ENCODE measurements at regions of chr1 and their contacts with region 1.

Region 1: DNA sequence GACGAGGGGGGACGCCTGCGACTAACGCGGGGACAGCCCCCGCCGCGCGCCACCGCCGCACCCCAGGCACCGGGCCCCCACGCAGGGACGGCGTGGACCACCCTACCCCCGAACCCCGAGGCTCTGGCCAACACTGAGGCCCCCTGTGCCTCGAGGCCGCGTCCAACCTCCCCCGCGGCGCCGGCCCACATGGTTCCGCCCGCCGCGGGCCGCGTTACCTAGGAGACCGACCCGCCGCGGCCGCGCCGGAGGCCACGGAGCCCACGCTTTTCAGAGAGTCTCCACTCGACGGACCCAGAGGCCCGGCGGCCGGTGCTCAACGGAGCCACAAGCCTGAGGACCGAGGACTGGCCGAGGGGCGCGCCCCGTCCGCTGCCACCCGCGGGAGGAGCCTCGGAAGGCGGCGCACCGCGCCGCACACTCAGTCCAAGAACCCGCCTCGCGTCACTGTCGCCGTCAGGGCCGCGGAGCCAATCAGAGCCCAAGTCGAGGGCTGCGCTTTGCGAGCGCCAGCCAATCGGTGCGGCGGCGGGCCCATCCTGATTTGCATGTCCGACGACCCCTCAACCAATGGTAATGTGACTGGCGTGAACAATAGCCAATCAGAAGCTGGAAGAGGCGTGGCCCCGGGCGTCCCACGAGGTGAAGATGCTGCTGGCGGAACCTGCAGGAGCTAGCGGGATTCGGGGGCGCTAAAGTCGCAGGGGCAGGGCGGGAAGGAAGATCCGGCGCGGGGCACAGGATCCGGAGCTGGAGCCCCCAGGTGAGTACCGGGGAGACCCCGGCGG is at the start of gene NPHP4:
- DNase-seq: peak; percentile 100
- ATAC-seq: peak; percentile 93
- H3K4me3 Mint-ChIP-seq: peak within 1 kb of the TSS; percentile 97
- H3K27ac Mint-ChIP-seq: peak within 1 kb of the TSS; percentile 96
- H3K4me1 Mint-ChIP-seq: peaks cover 25% of the 10 kb centered on the region
- H3K27me3 Mint-ChIP-seq: no peaks in the 10 kb centered on the region
- total RNA-seq, gene NPHP4: 12.9 to 14.1 TPM

Region 2: GRCh38 chr1:6007318-6008083 is 15.3 kb after region 1 on chr1:
- CTCF ChIA-PET with region 1: interaction called, 4 read pairs
- POLR2A ChIA-PET with region 1: no interaction called
- intact Hi-C with region 1: loop called in 1 of 2 experiments (anchors 1 kb)
- DNase-seq: peak; percentile 67
- ATAC-seq: peak; percentile 91
- H3K4me3 Mint-ChIP-seq: no peak overlapping the region
- H3K27ac Mint-ChIP-seq: peak overlapping the region; percentile 13
- H3K4me1 Mint-ChIP-seq: peaks cover 14% of the 10 kb centered on the region
- H3K27me3 Mint-ChIP-seq: no peaks in the 10 kb centered on the region

Region 3: GRCh38 chr1:6148497-6149241 is 156.4 kb after region 1 on chr1:
- CTCF ChIA-PET with region 1: no interaction called
- POLR2A ChIA-PET with region 1: no interaction called
- intact Hi-C with region 1: no loop called
- DNase-seq: peak; percentile 90
- ATAC-seq: peak; percentile 98
- H3K4me3 Mint-ChIP-seq: peak overlapping the region; percentile 28
- H3K27ac Mint-ChIP-seq: no peak overlapping the region
- H3K4me1 Mint-ChIP-seq: peaks cover 5% of the 10 kb centered on the region
- H3K27me3 Mint-ChIP-seq: peaks cover 7% of the 10 kb centered on the region

Region 4: DNA sequence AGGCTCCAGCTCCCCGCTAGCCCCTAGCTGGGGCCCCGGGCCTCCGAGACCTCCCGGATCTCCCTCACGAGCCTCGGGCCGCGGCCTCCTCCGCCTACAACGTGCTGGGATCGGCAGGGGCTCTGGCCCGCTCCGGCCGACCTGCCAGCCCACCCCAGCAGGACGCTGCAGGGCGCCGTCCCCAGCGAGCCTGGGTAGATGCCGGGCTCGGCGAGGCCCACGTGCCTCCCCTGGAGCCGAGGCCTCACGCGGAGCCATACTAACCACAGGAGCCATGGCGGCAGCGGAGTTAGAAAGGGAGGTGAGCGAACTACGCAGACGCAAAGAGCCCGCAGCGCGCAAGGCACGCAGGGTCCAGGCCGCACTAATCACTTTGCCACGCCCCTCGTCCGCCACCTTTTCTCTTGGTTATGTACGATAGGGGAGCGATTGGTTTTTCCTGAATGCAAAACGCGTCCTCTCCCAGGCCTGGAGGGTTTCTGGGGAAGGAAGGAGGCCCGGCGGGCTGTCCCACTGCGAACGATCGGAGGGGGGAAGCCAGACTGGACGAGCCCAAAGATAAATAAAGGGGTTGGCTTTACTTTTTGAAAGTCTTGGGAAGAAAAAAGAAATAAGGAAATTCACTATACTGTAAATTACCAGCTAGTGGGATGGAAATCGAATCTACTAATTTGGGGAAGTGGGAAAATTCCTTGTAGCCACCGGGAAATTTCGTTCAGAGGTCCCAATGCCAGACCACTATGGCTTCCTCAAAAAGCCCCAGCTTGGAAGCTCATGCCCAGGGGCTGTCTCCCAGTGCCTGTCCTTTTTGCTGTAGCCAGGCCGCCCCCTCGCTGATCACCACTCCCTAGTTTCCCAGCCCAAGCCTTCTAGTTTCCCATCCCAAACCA is 207.3 kb after region 1 on chr1 and contains the start of gene RPL22:
- CTCF ChIA-PET with region 1: interaction called, 4 read pairs
- POLR2A ChIA-PET with region 1: interaction called, 4 read pairs
- intact Hi-C with region 1: loop called (anchors 1 kb)
- DNase-seq: peak; percentile 99
- ATAC-seq: peak; percentile 99
- H3K4me3 Mint-ChIP-seq: peak within 1 kb of the TSS; percentile 99
- H3K27ac Mint-ChIP-seq: peak within 1 kb of the TSS; percentile 96
- H3K4me1 Mint-ChIP-seq: peaks cover 39% of the 10 kb centered on the region
- H3K27me3 Mint-ChIP-seq: no peaks in the 10 kb centered on the region
- total RNA-seq, gene RPL22: 392 to 475 TPM

Region 5: DNA sequence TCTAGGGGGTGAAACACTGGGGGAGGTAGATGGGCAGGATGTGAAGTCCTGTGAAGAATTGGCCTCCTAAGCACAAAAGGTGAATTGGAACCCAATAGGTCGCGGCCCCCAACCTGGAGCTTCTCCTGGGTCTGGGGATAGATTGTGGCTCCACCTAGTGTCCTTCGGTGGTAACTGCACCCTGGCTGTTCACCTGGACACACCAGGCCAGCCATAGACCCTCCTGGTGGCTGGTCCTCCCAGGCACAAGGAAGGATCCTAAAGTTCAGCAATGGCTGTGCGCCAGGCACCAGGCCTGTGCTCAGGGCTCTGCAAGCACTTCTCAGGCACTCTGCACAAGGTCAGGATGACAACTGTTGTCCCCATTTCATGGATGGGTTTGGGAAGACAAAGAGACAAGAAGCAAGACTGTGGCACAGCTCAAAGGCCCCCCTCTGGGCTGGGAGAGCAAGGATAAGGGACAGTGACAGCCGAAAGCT is 445.9 kb after region 1 on chr1:
- CTCF ChIA-PET with region 1: no interaction called
- POLR2A ChIA-PET with region 1: no interaction called
- intact Hi-C with region 1: no loop called
- DNase-seq: peak; percentile 85
- ATAC-seq: peak; percentile 72
- H3K4me3 Mint-ChIP-seq: no peak overlapping the region
- H3K27ac Mint-ChIP-seq: no peak overlapping the region
- H3K4me1 Mint-ChIP-seq: peaks cover 2% of the 10 kb centered on the region
- H3K27me3 Mint-ChIP-seq: peaks cover 16% of the 10 kb centered on the region

Region 6: DNA sequence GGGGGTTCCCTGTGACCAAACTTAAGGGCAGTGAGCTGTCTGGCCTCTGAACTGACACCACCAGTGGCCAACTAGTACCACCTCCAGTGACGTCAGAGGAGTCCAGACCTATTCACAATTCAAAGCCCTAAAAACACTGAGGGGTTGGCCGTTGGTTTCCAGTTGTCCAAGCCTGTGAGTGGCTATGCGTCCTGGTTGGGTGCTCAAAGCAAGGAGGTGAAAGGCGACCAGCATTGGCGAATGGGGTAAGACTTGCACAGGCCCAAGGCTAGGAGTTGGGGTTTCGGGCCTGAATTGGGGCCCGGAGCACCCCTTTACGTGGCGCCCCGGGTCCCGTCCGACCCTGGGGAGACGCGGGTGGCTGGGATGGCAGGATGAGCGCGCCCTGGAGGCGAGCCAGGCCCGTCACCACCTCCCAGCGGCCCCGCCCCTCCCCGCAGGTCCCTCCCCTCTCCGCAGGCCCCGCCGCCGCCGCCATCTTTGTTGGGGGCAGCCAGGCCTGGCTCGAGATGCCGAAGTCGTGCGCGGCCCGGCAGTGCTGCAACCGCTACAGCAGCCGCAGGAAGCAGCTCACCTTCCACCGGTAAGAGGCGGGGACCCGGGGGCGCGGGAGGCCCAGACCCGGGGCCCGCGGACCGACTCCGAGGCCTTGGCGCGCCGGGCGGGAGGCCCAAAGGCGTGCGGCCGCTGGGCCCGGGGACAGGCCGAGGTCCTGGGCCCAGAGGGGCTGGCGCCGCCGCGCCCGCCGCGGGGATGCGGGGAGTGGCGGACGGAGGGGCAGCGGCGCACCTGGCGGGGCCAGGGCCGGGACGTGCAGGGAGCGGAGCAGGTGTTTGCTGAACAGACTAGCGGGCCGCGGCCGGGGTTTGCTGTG is 632.7 kb after region 1 on chr1 and contains the start of gene THAP3:
- CTCF ChIA-PET with region 1: no interaction called
- POLR2A ChIA-PET with region 1: no interaction called
- intact Hi-C with region 1: loop called in 1 of 2 experiments (anchors 5 kb)
- DNase-seq: peak; percentile 96
- ATAC-seq: peak; percentile 98
- H3K4me3 Mint-ChIP-seq: peak within 1 kb of the TSS; percentile 85
- H3K27ac Mint-ChIP-seq: peak within 1 kb of the TSS; percentile 78
- H3K4me1 Mint-ChIP-seq: peaks cover 28% of the 10 kb centered on the region
- H3K27me3 Mint-ChIP-seq: no peaks in the 10 kb centered on the region
- total RNA-seq, gene THAP3: 19.4 to 22.1 TPM

Region 7: DNA sequence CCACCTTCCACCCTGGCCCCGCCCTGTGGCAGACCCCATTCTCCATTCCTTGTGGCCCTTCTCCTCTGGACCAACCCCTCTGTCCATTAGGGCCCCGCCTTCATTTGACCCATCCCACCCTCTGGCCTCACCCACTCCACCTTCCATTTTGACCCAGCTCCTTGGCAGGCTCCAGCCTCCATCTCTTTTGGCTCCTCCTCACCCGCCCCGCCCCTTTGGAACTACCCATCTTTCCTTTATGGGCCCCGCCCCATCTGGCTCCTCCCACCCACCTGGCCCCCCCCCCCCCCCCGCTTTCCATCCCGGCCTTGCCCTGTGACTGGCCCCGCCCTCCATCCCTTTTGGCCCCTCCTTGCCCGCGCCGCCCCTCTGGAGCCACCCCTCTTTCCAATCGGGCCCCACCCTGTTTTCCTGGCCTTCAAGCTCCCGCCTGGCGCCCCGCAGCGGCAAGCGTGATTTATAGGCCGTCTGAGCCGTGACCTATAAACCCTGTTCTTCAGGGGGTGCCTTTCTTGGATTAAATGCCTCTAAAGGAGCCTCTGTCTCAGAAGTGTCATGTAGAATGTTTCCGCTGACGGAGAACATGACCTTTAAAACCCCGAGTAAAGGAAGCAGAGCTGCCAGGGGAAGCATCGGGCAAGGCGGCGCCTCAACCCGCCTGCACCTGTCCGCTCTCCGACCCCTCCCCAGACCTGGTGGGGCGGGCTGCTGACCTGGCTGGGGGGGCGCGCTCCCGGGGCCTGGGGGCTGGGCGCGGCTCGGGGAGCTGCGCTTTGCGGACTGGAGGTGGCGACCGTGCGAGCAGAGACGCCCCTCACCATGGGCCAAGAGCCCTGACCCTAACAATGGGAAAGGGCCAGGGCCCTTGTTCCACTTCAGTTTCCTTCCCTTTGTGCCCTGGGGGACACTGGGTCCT is 971.0 kb after region 1 on chr1:
- CTCF ChIA-PET with region 1: no interaction called
- POLR2A ChIA-PET with region 1: no interaction called
- intact Hi-C with region 1: loop called in 1 of 2 experiments (anchors 10 kb)
- DNase-seq: peak; percentile 93
- ATAC-seq: peak; percentile 63
- H3K4me3 Mint-ChIP-seq: peak overlapping the region; percentile 69
- H3K27ac Mint-ChIP-seq: peak overlapping the region; percentile 85
- H3K4me1 Mint-ChIP-seq: peaks cover 22% of the 10 kb centered on the region
- H3K27me3 Mint-ChIP-seq: peaks cover 8% of the 10 kb centered on the region

Measured in activated CD4-positive, alpha-beta T cell treated with anti-CD3 and anti-CD28 coated beads for 36 hours (primary cell).